ENCODE measurements at regions of chr19 and their contacts with region 1.

Region 1: GRCh38 chr19:50922317-50922853 is 11.2 kb upstream of the KLK4 start:
- DNase-seq: peak; percentile 59 to 87
- H3K4me3 ChIP-seq: 0 out of 8 replicates have a peak overlapping the region, but pooled peaks of 1 of the 4 experiments have one; percentile 0
- H3K27ac ChIP-seq: no peak overlapping the region
- H3K4me1 ChIP-seq: peaks cover 0 to 7% (median 5%) of the 10 kb centered on the region in 4 experiments; a peak in 5 of 7 replicates
- H3K27me3 ChIP-seq: 0 out of 7 replicates have a peak, but pooled peaks cover 0 to 2% (median 0%) of the 10 kb centered on the region in 4 experiments
- CTCF ChIP-seq: peak; percentile 83 to 98 (median 90)
- EP300 ChIP-seq: no peak
- POLR2A ChIP-seq: no peak
- RAD21 ChIP-seq: peak; percentile 96 to 98

Region 2: DNA sequence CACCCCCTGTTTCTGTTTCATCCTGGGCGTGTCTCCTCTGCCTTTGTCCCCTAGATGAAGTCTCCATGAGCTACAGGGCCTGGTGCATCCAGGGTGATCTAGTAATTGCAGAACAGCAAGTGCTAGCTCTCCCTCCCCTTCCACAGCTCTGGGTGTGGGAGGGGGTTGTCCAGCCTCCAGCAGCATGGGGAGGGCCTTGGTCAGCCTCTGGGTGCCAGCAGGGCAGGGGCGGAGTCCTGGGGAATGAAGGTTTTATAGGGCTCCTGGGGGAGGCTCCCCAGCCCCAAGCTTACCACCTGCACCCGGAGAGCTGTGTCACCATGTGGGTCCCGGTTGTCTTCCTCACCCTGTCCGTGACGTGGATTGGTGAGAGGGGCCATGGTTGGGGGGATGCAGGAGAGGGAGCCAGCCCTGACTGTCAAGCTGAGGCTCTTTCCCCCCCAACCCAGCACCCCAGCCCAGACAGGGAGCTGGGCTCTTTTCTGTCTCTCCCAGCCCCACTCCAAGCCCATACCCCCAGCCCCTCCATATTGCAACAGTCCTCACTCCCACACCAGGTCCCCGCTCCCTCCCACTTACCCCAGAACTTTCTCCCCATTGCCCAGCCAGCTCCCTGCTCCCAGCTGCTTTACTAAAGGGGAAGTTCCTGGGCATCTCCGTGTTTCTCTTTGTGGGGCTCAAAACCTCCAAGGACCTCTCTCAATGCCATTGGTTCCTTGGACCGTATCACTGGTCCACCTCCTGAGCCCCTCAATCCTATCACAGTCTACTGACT is 67.6 kb before region 1 on chr19 and contains the start of gene KLK3:
- CTCF ChIA-PET with region 1: no interaction called
- POLR2A ChIA-PET with region 1: no interaction called
- DNase-seq: no peak
- H3K4me3 ChIP-seq: no peak within 1 kb of the TSS
- H3K27ac ChIP-seq: no peak within 1 kb of the TSS
- H3K4me1 ChIP-seq: peaks cover 0 to 14% (median 6%) of the 10 kb centered on the region in 4 experiments; a peak in 5 of 7 replicates
- H3K27me3 ChIP-seq: 0 out of 7 replicates have a peak, but pooled peaks cover 0 to 3% (median 0%) of the 10 kb centered on the region in 4 experiments
- CTCF ChIP-seq: no peak
- EP300 ChIP-seq: no peak
- POLR2A ChIP-seq: no peak
- RAD21 ChIP-seq: no peak
- total RNA-seq, gene KLK3: not detected in 2 replicates

Region 3: DNA sequence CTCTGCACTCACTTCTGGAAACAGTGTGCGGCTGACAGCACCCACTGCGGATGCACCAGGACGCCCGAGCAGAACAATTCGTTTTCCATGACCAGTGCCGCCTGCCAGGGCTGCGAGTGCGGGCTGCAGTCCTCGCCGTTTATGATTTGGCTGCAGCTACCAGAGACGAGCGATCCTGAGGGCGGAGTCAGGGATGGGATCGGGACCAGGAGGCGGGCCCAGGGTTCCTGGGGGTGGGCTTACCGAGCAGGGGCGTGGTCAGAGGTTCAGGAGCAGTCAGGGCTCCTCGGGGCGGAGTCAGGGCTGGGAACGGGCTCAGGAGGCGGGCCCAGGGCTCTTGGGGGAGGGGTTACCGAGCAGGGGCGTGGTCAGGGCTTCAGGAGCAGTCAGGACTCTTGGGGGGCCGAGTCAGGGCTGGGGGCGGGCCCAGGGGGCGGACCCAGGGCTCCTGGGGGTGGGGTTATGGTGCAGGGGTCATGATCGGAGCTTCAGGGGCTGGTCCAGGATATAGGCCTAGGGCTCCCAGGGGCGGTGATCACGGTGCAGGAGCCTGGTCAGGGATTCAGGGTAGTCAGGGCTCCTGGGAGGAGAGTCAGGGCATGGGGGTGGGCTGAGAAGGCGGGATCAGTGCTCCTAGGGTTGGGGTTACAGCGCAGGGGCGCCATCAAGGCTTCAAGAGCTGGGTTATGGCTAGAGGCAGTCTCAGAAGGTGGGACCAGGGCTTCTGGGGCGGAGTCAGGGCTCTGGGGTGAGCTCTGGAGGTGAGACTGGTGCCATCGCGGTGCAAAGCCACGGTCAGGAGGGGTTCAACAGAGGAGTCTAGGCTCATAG is 12.9 kb before region 1 on chr19:
- CTCF ChIA-PET with region 1: interaction called, 22 read pairs
- POLR2A ChIA-PET with region 1: interaction called, 3 read pairs
- DNase-seq: peak; percentile 95 to 100
- H3K4me3 ChIP-seq: peak overlapping the region; percentile 38 to 68 (median 54)
- H3K27ac ChIP-seq: no peak overlapping the region
- H3K4me1 ChIP-seq: peaks cover 0 to 14% (median 9%) of the 10 kb centered on the region in 4 experiments; a peak in 5 of 7 replicates
- H3K27me3 ChIP-seq: peaks cover 20 to 40% (median 32%) of the 10 kb centered on the region in 4 experiments
- CTCF ChIP-seq: no peak
- EP300 ChIP-seq: no peak
- POLR2A ChIP-seq: no peak
- RAD21 ChIP-seq: no peak

Region 4: GRCh38 chr19:50959731-50960500 is 37.5 kb after region 1 on chr19:
- CTCF ChIA-PET with region 1: no interaction called
- POLR2A ChIA-PET with region 1: no interaction called
- DNase-seq: no peak
- H3K4me3 ChIP-seq: no peak overlapping the region
- H3K27ac ChIP-seq: no peak overlapping the region
- H3K4me1 ChIP-seq: no peaks in the 10 kb centered on the region
- H3K27me3 ChIP-seq: no peaks in the 10 kb centered on the region; a peak in 1 of 7 replicates
- CTCF ChIP-seq: no peak
- EP300 ChIP-seq: no peak
- POLR2A ChIP-seq: no peak
- RAD21 ChIP-seq: no peak

Region 5: DNA sequence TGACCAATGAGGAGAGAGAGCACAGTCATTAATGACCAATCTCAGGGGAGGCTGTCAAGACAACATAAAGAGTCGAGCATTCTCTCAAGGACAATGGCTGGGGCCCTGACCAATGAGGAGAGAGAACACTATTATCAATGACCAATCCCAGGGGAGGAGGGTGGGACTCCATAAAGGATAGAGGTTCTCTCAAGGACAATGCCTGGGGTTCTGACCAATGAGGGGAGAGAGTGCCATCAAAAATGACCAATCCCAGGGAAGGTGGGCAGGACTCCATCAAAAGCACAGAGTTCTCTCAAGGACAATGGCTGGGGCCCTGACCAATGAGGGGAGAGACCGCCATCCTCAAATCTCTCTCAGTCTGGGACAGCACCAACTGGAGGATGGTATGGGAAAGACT is 107.3 kb after region 1 on chr19:
- CTCF ChIA-PET with region 1: no interaction called
- POLR2A ChIA-PET with region 1: no interaction called
- DNase-seq: no peak
- H3K4me3 ChIP-seq: no peak overlapping the region
- H3K27ac ChIP-seq: no peak overlapping the region
- H3K4me1 ChIP-seq: peaks cover 3 to 26% (median 16%) of the 10 kb centered on the region in 4 experiments
- H3K27me3 ChIP-seq: no peaks in the 10 kb centered on the region; a peak in 1 of 7 replicates
- CTCF ChIP-seq: peak in 1 of 3 experiments; percentile 26; a peak in 1 of 4 replicates
- EP300 ChIP-seq: no peak
- POLR2A ChIP-seq: no peak
- RAD21 ChIP-seq: no peak

Region 6: GRCh38 chr19:51055866-51056265 is 133.5 kb after region 1 on chr19:
- CTCF ChIA-PET with region 1: no interaction called
- POLR2A ChIA-PET with region 1: no interaction called
- DNase-seq: no peak
- H3K4me3 ChIP-seq: no peak overlapping the region
- H3K27ac ChIP-seq: no peak overlapping the region
- H3K4me1 ChIP-seq: peaks cover 0 to 3% (median 0%) of the 10 kb centered on the region in 4 experiments; a peak in 2 of 7 replicates
- H3K27me3 ChIP-seq: no peaks in the 10 kb centered on the region; a peak in 1 of 7 replicates
- CTCF ChIP-seq: no peak
- EP300 ChIP-seq: no peak
- POLR2A ChIP-seq: no peak
- RAD21 ChIP-seq: no peak

Measured in H1 (cell line).